ENCODE measurements at regions of chr2 and their contacts with region 1.

Region 1: GRCh38 chr2:32498306-32498705 is 129.5 kb upstream of the TTC27 start:
- H3K4me3 Mint-ChIP-seq: no peak overlapping the region
- H3K27ac Mint-ChIP-seq: peak overlapping the region; percentile 46
- H3K4me1 Mint-ChIP-seq: peaks cover 16% of the 10 kb centered on the region
- H3K27me3 Mint-ChIP-seq: no peaks in the 10 kb centered on the region

Region 2: DNA sequence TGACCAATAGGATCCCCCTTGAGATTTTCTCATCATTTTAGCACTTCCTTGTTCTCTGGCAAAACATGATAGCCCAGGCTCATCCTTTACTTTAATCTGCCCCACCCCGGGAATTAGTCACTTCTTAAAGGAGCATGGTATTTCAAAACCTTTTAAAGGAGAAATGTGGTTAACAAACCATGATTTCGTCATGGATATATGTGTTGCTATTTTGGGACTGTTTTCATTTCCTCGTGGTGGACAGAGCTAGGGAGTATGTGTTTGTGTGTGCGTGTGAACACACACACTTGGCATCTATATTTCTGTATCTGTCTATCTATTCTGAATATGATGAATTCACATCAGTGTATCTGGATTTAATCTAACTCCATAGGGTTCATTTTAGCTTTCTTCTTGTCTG is 13.4 kb before region 1 on chr2:
- intact Hi-C with region 1: loop called (anchors 2 kb)
- H3K4me3 Mint-ChIP-seq: no peak overlapping the region
- H3K27ac Mint-ChIP-seq: peak overlapping the region; percentile 51
- H3K4me1 Mint-ChIP-seq: peaks cover 14% of the 10 kb centered on the region
- H3K27me3 Mint-ChIP-seq: no peaks in the 10 kb centered on the region

Region 3: DNA sequence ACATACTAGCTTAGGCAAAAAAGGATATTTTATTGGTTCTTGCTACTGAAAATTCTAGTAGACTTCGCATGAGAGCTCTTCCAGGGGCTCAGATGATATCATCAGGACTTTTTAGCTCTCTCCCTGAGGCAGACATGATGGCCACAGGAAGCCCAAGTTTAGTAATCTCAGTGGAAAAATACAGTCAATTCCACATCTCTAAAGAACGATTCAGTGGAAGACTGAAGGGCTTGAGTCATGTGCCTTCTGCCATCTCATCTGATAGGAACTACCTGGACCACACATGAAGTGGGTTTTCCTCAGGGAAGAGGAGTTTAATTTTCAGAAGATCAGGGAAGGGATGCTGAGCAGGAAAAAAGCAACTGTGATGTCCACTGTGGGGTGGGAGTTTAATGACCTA is 246.9 kb after region 1 on chr2:
- intact Hi-C with region 1: no loop called
- H3K4me3 Mint-ChIP-seq: no peak overlapping the region
- H3K27ac Mint-ChIP-seq: no peak overlapping the region
- H3K4me1 Mint-ChIP-seq: no peaks in the 10 kb centered on the region
- H3K27me3 Mint-ChIP-seq: no peaks in the 10 kb centered on the region